ENCODE measurements at regions of chr10 and their contacts with region 1.

Region 1: DNA sequence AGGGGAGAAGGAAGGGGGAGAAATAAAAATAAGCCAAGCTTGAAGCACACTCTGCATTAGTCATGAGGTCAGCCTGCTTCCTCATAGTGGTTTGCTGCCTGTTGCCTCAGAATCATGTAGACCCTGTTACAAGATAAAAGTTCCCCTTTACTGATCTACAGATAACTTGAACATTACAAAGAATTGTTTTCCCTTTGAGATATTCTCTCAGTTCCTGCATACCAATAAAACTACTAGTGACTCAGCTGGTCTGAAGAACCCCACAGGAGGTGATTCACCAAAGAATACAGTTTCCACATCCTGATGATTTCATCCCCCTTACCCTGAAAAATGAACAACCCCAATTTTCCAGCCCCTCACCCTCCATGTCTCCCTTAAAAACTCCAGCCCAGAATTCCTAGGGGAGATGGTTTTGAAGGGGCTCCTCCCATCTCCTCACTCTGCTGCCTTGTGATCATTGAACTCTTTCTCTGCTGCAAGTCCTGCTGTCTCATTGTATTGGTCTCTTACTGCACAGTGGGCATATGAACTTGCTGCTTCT is 31.5 kb upstream of the NRP1 start:
- DNase-seq: peak; percentile 51
- H3K4me3 Mint-ChIP-seq: no peak overlapping the region
- H3K27ac Mint-ChIP-seq: peak overlapping the region; percentile 84
- H3K4me1 Mint-ChIP-seq: peaks cover 19% of the 10 kb centered on the region
- H3K27me3 Mint-ChIP-seq: peaks cover 25% of the 10 kb centered on the region

Region 2: DNA sequence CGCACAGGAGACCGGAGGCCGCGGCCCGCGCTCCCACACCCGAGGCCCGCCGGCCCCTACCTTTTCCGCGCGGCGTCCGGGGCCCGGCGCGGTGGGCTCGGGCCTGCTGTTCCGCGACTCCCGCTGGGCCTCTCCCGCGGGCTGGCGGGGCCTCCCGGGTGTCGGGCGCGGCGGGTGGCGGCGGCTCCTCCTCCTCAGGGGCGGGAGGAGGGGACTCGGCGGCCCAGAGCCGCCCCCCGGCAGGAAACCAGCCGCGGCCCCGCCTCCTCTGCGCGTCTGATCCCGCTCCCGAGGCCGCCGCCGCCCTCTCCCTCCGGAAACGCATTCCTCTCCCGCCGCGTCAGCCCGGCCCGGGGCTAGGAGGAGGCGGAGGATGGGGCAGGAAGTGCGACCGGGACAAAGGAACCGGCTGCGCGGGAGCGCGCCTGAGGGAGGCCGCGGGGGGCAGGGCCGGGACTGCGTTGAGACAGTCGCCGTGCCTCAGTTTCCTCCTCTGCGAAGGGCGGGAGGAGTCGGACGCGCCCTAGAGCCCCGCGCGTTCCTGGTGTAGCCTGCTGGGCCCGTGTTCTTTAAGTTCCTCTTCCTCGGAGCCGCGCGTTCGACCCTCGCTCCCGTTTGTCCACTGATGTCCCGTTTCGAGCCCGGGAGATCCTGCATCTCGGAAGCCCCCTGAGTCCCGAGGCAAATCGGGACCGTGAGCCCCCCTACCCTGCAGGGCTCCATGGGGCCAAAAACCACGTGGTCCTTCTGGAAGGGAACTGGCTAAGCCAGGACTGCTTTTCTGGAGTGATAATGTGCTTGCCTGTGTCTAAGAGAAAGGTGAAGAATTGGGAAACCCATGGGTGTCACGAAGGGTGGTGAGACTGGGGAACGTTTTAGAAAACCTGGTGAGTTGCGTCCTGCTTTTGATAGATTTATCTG is 407.6 kb before region 1 on chr10 and contains the start of gene ITGB1:
- CTCF ChIA-PET with region 1: no interaction called
- POLR2A ChIA-PET with region 1: no interaction called
- intact Hi-C with region 1: no loop called
- DNase-seq: peak; percentile 90
- H3K4me3 Mint-ChIP-seq: peak within 1 kb of the TSS; percentile 90
- H3K27ac Mint-ChIP-seq: peak within 1 kb of the TSS; percentile 99
- H3K4me1 Mint-ChIP-seq: peaks cover 55% of the 10 kb centered on the region
- H3K27me3 Mint-ChIP-seq: peaks cover 4% of the 10 kb centered on the region
- total RNA-seq, gene ITGB1: 113 to 117 TPM

Region 3: GRCh38 chr10:33095867-33096815 is 269.8 kb before region 1 on chr10:
- CTCF ChIA-PET with region 1: no interaction called
- POLR2A ChIA-PET with region 1: no interaction called
- intact Hi-C with region 1: no loop called
- DNase-seq: no peak
- H3K4me3 Mint-ChIP-seq: no peak overlapping the region
- H3K27ac Mint-ChIP-seq: no peak overlapping the region
- H3K4me1 Mint-ChIP-seq: peaks cover 61% of the 10 kb centered on the region
- H3K27me3 Mint-ChIP-seq: no peaks in the 10 kb centered on the region

Region 4: DNA sequence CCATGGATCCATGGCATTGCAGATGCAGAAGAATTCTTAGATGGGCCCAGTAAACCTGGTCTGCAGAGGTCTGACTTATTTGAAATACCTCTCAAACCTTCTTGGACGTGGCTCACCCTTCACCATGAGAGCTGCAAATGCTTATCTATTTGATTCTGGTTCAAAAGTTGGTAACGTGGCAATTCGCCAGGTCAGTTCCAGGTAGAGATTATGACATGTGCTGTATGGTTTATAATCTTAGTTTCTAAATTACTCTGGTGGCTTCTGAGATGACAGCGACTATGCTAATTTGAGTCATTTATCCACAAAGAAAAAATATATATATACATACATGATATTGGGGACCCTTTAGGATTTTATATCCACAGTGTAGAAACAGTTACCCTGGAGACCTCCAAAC is 100.3 kb before region 1 on chr10:
- CTCF ChIA-PET with region 1: no interaction called
- POLR2A ChIA-PET with region 1: no interaction called
- intact Hi-C with region 1: loop called (anchors 1 kb)
- DNase-seq: peak; percentile 77
- H3K4me3 Mint-ChIP-seq: no peak overlapping the region
- H3K27ac Mint-ChIP-seq: peak overlapping the region; percentile 13
- H3K4me1 Mint-ChIP-seq: peaks cover 28% of the 10 kb centered on the region
- H3K27me3 Mint-ChIP-seq: peaks cover 32% of the 10 kb centered on the region

Region 5: DNA sequence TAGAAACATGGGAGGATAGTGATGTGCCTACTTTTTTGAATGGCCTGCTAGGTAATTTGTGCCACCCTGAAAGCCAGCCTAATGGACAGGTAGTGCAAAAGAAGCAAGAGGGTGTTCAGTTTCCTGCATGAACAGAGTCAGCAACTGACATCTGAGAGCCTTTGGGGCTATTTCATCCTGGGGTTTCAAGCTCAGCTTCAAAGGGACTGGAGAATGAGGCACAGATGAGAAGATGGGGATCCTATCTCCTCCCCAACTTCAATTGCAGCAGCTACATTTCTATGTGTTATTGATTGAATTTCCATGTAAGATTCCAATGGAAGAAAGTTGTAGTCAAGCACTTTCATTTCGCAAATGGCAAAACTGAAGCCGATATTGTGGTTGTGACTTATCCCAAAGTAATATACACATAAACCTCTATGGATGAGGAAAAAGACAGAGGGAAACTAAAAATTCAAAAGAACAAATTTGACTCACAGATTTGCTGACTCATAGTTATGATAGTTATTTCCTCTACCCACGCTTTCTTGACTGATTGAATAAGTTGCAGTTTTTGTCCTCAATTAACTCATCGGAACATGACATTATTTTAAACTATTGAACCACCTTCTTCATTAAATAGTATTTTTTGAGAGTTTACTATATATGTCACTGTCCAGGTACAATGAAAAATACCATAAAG is 11.2 kb after region 1 on chr10:
- CTCF ChIA-PET with region 1: no interaction called
- POLR2A ChIA-PET with region 1: no interaction called
- intact Hi-C with region 1: loop called (anchors 1 kb)
- DNase-seq: no peak
- H3K4me3 Mint-ChIP-seq: no peak overlapping the region
- H3K27ac Mint-ChIP-seq: no peak overlapping the region
- H3K4me1 Mint-ChIP-seq: peaks cover 27% of the 10 kb centered on the region
- H3K27me3 Mint-ChIP-seq: peaks cover 13% of the 10 kb centered on the region

Region 6: GRCh38 chr10:33412653-33413361 is 46.9 kb after region 1 on chr10:
- CTCF ChIA-PET with region 1: no interaction called
- POLR2A ChIA-PET with region 1: no interaction called
- intact Hi-C with region 1: loop called (anchors 1 kb)
- DNase-seq: peak; percentile 36
- H3K4me3 Mint-ChIP-seq: no peak overlapping the region
- H3K27ac Mint-ChIP-seq: no peak overlapping the region
- H3K4me1 Mint-ChIP-seq: peaks cover 2% of the 10 kb centered on the region
- H3K27me3 Mint-ChIP-seq: peaks cover 41% of the 10 kb centered on the region

Region 7: DNA sequence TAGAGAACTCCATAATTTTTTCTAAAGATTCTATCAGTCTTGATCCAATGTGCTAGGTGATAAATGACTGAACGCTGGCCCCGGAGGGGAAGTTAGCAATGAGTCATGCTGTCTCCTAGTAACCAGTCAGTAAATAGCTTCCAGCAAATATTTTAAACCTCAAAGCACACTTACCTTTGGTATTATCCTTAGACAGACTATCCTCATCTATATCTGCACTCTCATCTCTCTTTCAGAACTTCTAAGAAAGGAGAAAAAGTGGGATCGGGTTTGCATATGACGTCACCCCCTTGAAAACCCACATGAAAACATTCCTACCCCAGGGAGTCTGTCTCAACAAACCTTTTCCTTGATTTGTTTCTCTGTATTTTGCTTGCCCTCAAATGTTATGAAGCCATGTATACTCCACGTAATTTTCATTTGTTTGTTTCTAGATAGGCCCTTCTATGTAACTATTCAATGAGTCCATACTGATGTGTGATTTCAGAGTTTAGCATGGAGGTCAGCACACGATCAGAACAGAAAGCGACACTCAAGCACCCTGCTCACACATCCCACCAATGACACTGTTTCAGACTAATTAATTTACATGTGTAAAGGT is 143.4 kb after region 1 on chr10:
- CTCF ChIA-PET with region 1: no interaction called
- POLR2A ChIA-PET with region 1: interaction called, 3 read pairs
- intact Hi-C with region 1: loop called (anchors 5 kb)
- DNase-seq: peak; percentile 60
- H3K4me3 Mint-ChIP-seq: no peak overlapping the region
- H3K27ac Mint-ChIP-seq: no peak overlapping the region
- H3K4me1 Mint-ChIP-seq: peaks cover 13% of the 10 kb centered on the region
- H3K27me3 Mint-ChIP-seq: peaks cover 18% of the 10 kb centered on the region